Activated B cell treated with CpG ODN at 0.5 μM for 24 hours (primary cell): ENCODE measurements at regions of chr7 and their contacts with region 1.

Region 1: DNA sequence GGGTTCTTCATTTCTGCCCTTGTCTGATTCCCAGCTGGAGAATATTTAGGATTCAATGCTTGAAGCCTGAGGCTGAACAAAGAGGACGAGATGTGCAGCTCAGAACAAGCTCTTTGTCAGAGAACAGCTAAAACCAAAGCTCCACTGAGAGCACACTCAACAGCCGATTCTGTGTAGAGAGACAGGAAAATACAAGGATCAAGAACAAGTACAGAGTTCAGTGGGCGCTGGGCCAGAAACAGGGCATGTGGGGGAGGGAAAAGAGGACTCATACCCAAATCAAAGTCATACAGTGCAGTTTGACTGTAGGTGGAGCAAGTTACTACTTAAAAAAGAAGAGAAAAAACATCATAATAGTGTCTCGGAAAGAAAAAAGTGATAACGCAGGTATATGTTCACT is at the start of gene AGMO:
- DNase-seq: no peak
- ATAC-seq: no peak
- H3K4me3 Mint-ChIP-seq: no peak within 1 kb of the TSS
- H3K27ac Mint-ChIP-seq: no peak within 1 kb of the TSS
- H3K4me1 Mint-ChIP-seq: no peaks in the 10 kb centered on the region
- H3K27me3 Mint-ChIP-seq: no peaks in the 10 kb centered on the region
- CTCF ChIP-seq: no peak
- total RNA-seq, gene AGMO: not detected in 2 replicates

Region 2: DNA sequence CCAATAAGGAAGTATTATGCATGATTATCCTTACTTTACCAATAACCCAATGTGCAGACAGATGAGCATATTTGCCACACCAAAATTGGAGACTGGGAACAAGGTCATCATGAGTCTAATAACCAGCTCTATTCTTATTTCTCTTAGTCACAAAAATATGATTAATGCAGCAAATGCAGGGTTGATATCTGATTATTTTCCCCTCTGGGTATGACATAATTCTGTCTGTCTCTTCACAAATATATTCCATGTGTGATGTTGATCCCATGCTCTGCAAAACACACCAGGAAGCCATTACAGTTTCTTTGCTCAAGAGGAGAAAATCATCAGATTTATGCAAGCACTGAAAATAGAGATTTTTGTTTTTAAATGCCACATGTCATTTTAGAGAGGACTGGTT is 462.8 kb before region 1 on chr7:
- CTCF ChIA-PET with region 1: no interaction called
- POLR2A ChIA-PET with region 1: no interaction called
- intact Hi-C with region 1: no loop called
- DNase-seq: no peak
- ATAC-seq: no peak
- H3K4me3 Mint-ChIP-seq: no peak overlapping the region
- H3K27ac Mint-ChIP-seq: no peak overlapping the region
- H3K4me1 Mint-ChIP-seq: no peaks in the 10 kb centered on the region
- H3K27me3 Mint-ChIP-seq: no peaks in the 10 kb centered on the region
- CTCF ChIP-seq: no peak

Region 3: GRCh38 chr7:15280078-15280733 is 281.6 kb before region 1 on chr7:
- CTCF ChIA-PET with region 1: no interaction called
- POLR2A ChIA-PET with region 1: no interaction called
- intact Hi-C with region 1: no loop called
- DNase-seq: no peak
- ATAC-seq: no peak
- H3K4me3 Mint-ChIP-seq: no peak overlapping the region
- H3K27ac Mint-ChIP-seq: no peak overlapping the region
- H3K4me1 Mint-ChIP-seq: no peaks in the 10 kb centered on the region
- H3K27me3 Mint-ChIP-seq: no peaks in the 10 kb centered on the region
- CTCF ChIP-seq: no peak

Region 4: DNA sequence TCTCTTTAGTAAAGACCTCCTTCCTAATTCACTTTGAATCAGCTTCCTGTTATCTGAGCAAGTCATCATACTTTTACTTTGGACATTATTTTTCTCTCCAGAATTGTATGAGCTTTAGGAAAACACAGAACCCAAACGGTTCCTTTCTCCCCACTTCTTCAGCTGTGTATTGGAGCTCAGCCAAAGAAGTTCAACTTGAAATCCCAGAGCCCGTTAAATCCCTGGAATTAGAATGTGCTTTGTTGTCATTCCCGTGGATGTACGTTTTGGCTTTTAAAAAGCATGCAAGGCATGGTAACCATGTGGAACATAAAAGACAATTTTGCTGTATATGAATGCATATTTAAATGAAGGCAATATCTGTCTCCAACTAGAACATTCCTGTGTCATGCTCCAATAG is 46.6 kb before region 1 on chr7:
- CTCF ChIA-PET with region 1: no interaction called
- POLR2A ChIA-PET with region 1: no interaction called
- intact Hi-C with region 1: loop called (anchors 10 kb)
- DNase-seq: no peak
- ATAC-seq: no peak
- H3K4me3 Mint-ChIP-seq: no peak overlapping the region
- H3K27ac Mint-ChIP-seq: no peak overlapping the region
- H3K4me1 Mint-ChIP-seq: no peaks in the 10 kb centered on the region
- H3K27me3 Mint-ChIP-seq: no peaks in the 10 kb centered on the region
- CTCF ChIP-seq: no peak

Region 5: DNA sequence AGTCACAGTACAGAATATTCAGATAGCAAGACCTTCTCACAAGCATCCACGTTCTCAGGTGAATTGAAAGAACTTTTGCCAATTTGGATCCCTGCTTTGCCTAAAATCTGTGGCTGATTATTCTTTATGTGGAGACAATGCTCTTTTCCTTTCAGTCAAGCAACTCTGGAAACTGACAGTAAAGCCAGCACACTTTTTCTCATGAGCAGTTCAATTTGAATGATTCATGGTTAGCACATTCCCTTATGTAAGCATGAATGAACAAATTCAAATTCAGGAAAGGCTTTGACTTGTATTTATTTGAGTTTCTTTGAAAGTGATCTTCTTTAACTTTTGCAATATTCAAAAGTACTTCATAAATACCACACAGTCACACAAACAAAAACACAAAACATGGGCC is 67.0 kb after region 1 on chr7:
- CTCF ChIA-PET with region 1: no interaction called
- POLR2A ChIA-PET with region 1: no interaction called
- intact Hi-C with region 1: loop called (anchors 10 kb)
- DNase-seq: no peak
- ATAC-seq: no peak
- H3K4me3 Mint-ChIP-seq: no peak overlapping the region
- H3K27ac Mint-ChIP-seq: no peak overlapping the region
- H3K4me1 Mint-ChIP-seq: no peaks in the 10 kb centered on the region
- H3K27me3 Mint-ChIP-seq: no peaks in the 10 kb centered on the region
- CTCF ChIP-seq: no peak